Activated CD4-positive, alpha-beta memory T cell treated with anti-CD3 and anti-CD28 coated beads, Interleukin-2, amount 10 ng/mL, durations not matched to agents 7 days and 5 days (primary cell): ENCODE measurements at regions of chr2 and their contacts with region 1.

Region 1: GRCh38 chr2:230847883-230848388 is 16.8 kb upstream of the ITM2C start:
- DNase-seq: peak; percentile 89
- H3K4me3 Mint-ChIP-seq: no peak overlapping the region
- H3K27ac Mint-ChIP-seq: no peak overlapping the region
- H3K4me1 Mint-ChIP-seq: peaks cover 13% of the 10 kb centered on the region
- H3K27me3 Mint-ChIP-seq: peaks cover 61% of the 10 kb centered on the region

Region 2: DNA sequence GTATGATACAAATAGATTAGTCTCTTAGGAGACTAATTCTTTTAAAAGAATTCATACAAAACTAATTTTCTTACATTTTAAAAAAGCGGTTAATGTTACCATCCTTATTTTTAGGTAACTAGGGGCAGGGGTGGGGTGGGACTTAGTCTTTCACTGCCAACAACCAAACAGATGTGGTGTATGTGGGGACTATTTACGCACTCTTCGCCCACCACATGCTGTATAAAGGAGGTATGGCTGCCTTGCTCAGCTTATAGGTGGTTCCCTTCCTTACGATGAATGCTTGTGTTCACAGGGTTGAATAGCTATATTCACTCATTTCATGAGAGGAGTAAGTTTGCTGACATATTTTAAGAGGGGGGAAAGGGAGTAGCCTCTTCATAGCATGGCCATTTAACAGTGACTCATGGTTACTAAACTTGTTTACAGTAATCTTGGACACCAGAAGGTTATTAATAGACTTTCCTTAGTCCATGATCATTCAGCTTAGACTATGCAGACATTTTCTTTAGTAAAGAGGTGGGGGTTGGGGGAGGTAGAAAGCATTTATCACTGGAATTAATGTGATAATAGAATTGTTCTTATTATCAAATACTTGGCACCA is 73.5 kb before region 1 on chr2:
- CTCF ChIA-PET with region 1: no interaction called
- POLR2A ChIA-PET with region 1: no interaction called
- DNase-seq: no peak
- H3K4me3 Mint-ChIP-seq: no peak overlapping the region
- H3K27ac Mint-ChIP-seq: no peak overlapping the region
- H3K4me1 Mint-ChIP-seq: peaks cover 86% of the 10 kb centered on the region
- H3K27me3 Mint-ChIP-seq: no peaks in the 10 kb centered on the region

Region 3: DNA sequence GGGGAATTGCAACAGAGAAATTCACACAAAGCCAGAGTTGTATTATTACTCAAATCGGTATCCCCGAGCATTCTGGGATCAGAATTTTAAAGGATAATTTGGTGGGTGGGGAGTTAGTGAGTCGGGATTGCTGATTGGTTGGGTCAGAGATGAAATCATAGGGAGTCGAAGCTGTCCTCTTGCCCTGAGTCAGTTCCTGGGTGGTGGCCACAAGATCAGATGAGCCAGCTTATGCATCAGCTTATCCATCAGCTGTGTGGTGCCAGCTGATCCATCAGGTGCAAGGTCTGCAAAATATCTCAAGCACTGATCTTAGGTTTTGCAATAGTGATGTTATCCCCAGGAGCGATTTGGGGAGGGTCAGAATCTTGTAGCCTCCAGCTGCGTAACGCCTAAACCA is 17.5 kb before region 1 on chr2:
- CTCF ChIA-PET with region 1: interaction called, 11 read pairs
- POLR2A ChIA-PET with region 1: no interaction called
- DNase-seq: no peak
- H3K4me3 Mint-ChIP-seq: no peak overlapping the region
- H3K27ac Mint-ChIP-seq: no peak overlapping the region
- H3K4me1 Mint-ChIP-seq: peaks cover 25% of the 10 kb centered on the region
- H3K27me3 Mint-ChIP-seq: peaks cover 55% of the 10 kb centered on the region